GM13977 (cell line): ENCODE measurements at regions of chr11 and their contacts with region 1.

Region 1: GRCh38 chr11:116787786-116788486 is at the start of gene ZPR1:
- DNase-seq: peak; percentile 96
- CTCF ChIP-seq: no peak

Region 2: GRCh38 chr11:116826751-116827461 is 39.0 kb after region 1 on chr11:
- in situ Hi-C with region 1: no loop called
- DNase-seq: no peak
- CTCF ChIP-seq: no peak

Region 3: DNA sequence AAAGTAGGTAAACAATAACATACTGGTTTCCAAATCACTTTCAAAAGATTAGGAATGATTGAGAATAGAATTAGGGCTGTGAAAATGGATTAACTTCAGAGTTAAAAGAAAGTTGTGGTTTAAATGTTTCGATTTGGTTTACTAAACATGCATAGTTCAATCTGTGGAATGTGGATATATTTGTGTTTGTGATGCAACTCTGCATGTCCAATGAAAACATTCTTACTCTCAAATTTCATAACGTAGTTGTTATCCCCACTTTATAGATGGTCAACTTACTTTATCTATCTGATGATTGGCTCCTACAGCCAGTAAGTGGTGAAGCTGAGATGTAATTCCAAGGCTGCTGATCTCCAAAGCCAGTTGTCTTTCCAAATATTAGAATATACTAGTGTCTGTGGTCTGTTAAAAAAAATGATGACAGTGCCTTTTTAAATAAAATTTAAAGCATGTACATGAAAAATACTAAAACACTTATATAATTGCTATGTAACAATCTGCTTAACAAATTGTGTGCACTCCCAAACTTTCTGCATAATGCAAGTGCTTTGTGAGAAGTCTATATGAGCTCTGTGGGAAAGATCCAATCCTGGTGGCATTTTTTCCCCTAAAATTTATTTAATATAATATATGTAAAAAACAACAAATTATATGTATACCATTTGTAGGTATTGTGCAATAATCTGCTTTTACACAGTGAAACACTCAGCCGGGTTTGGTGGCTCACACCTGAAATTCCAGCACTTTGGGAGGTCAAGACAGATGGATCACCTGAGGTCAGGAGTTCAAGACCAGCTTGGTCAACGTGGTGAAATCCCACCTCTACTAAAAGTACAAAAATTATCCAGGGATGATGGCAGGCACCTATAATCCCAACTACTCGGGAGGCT is 320.0 kb after region 1 on chr11:
- in situ Hi-C with region 1: loop called (anchors 25 kb)
- DNase-seq: no peak
- CTCF ChIP-seq: no peak

Region 4: GRCh38 chr11:117273550-117274289 is 485.8 kb after region 1 on chr11:
- in situ Hi-C with region 1: no loop called
- DNase-seq: no peak
- CTCF ChIP-seq: no peak